Ascending aorta (tissue), 2 donors: ENCODE measurements at regions of chr6 and their contacts with region 1.

Region 1: DNA sequence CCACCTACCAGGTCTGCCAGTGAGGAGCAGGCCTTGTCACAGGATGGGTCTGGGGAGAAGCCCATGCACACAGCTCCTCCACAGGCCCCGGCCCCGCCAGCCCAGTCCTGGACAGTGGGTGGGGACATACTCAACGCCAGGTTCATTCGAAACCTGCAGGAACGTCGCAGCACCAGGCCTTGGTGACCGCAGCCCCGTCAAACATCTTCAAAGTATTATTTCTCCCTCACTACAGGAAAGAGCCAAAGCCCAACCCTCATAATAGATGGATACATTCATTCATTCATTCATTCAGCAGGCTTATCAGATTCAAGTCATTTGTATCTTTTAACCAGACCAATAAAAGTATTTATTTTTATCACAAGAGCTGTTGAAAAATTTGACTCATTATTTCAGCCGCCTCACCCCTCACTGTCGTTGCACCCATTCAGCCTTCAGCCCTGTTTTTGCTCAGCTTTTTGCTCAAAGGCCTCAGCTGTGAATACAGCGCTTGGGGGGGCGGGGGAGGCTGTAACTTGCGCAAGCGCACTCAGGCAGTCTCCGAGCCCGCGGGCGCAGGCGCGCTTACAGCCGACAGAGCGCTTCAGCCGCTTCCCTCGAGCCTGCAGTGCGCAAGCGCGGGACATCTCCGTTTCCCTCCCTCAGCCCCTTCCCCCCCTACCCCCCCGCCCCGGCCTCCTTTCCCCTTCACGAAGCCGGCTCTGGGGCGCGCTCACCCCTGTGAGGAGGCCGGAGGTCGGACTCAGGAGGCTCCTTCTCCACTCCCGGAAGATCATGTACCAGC is at the start of gene C6orf136:
- DNase-seq: peak; percentile 67 to 95
- H3K4me3 ChIP-seq: peak within 1 kb of the TSS; percentile 89 to 96
- H3K27ac ChIP-seq: peak within 1 kb of the TSS; percentile 85 to 93
- H3K4me1 ChIP-seq: peaks cover 0 to 12% of the 10 kb centered on the region in 2 donors
- H3K27me3 ChIP-seq: no peaks in the 10 kb centered on the region
- CTCF ChIP-seq: no peak
- total RNA-seq, gene C6orf136: 6.2 TPM

Region 2: GRCh38 chr6:30672445-30673253 is 26.0 kb after region 1 on chr6 and contains the start of gene DHX16:
- intact Hi-C with region 1: loop called (anchors 2 kb)
- DNase-seq: peak; percentile 83 to 99
- H3K4me3 ChIP-seq: peak within 1 kb of the TSS; percentile 90 to 93
- H3K27ac ChIP-seq: peak within 1 kb of the TSS; percentile 71 to 81
- H3K4me1 ChIP-seq: peaks cover 9 to 15% of the 10 kb centered on the region in 2 donors
- H3K27me3 ChIP-seq: no peaks in the 10 kb centered on the region
- CTCF ChIP-seq: peak; percentile 78 to 84 (median 83)
- total RNA-seq, gene DHX16: 39.2 TPM